ENCODE measurements at regions of chr10 and their contacts with region 1.

Region 1: GRCh38 chr10:92848441-92849233 is at the start of gene EXOC6:
- DNase-seq: peak; percentile 78
- H3K4me3 Mint-ChIP-seq: peak within 1 kb of the TSS; percentile 88
- H3K27ac Mint-ChIP-seq: peak within 1 kb of the TSS; percentile 93
- H3K4me1 Mint-ChIP-seq: peaks cover 38% of the 10 kb centered on the region
- H3K27me3 Mint-ChIP-seq: peaks cover 2% of the 10 kb centered on the region
- total RNA-seq, gene EXOC6: 13.5 TPM in 2 replicates

Region 2: GRCh38 chr10:92573798-92574547 is 274.7 kb before region 1 on chr10 and contains the start of gene IDE:
- intact Hi-C with region 1: loop called (anchors 1 kb)
- DNase-seq: peak; percentile 84
- H3K4me3 Mint-ChIP-seq: peak within 1 kb of the TSS; percentile 88
- H3K27ac Mint-ChIP-seq: peak within 1 kb of the TSS; percentile 89
- H3K4me1 Mint-ChIP-seq: peaks cover 37% of the 10 kb centered on the region
- H3K27me3 Mint-ChIP-seq: no peaks in the 10 kb centered on the region
- total RNA-seq, gene IDE: 43.4 and 54.5 TPM in 2 replicates

Region 3: GRCh38 chr10:92689663-92690210 is 158.9 kb before region 1 on chr10 and contains the start of gene HHEX:
- intact Hi-C with region 1: loop called (anchors 2 kb)
- DNase-seq: no peak
- H3K4me3 Mint-ChIP-seq: peak within 1 kb of the TSS; percentile 73
- H3K27ac Mint-ChIP-seq: peak within 1 kb of the TSS; percentile 55
- H3K4me1 Mint-ChIP-seq: peaks cover 23% of the 10 kb centered on the region
- H3K27me3 Mint-ChIP-seq: peaks cover 82% of the 10 kb centered on the region
- total RNA-seq, gene HHEX: 0.16 and 0.32 TPM in 2 replicates

Region 4: GRCh38 chr10:92778091-92778490 is 70.5 kb before region 1 on chr10:
- intact Hi-C with region 1: no loop called
- DNase-seq: no peak
- H3K4me3 Mint-ChIP-seq: no peak overlapping the region
- H3K27ac Mint-ChIP-seq: no peak overlapping the region
- H3K4me1 Mint-ChIP-seq: no peaks in the 10 kb centered on the region
- H3K27me3 Mint-ChIP-seq: peaks cover 42% of the 10 kb centered on the region

Region 5: GRCh38 chr10:92880233-92880861 is 31.7 kb after region 1 on chr10:
- intact Hi-C with region 1: loop called (anchors 1 kb)
- DNase-seq: no peak
- H3K4me3 Mint-ChIP-seq: no peak overlapping the region
- H3K27ac Mint-ChIP-seq: no peak overlapping the region
- H3K4me1 Mint-ChIP-seq: peaks cover 18% of the 10 kb centered on the region
- H3K27me3 Mint-ChIP-seq: peaks cover 3% of the 10 kb centered on the region

Region 6: DNA sequence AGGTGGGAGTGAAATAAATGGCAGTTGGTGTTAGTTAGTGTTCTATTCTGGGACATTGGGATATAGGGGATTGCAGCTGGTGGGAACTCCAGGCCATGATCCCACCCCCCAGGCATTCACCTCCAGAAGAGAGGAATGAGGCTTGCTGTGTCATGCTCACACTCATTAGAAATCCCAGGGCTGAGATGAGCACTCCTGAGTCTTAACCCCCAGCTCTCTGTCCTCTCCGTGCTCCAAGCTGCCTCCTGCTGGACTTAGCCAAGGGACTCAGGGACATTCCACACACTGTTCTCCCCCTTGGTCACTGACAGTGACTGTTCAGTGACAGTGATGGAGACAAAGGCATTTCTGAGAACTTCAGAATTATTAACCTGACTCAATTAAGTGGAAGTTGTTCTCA is 246.6 kb after region 1 on chr10:
- intact Hi-C with region 1: no loop called
- DNase-seq: no peak
- H3K4me3 Mint-ChIP-seq: no peak overlapping the region
- H3K27ac Mint-ChIP-seq: no peak overlapping the region
- H3K4me1 Mint-ChIP-seq: no peaks in the 10 kb centered on the region
- H3K27me3 Mint-ChIP-seq: peaks cover 8% of the 10 kb centered on the region

Region 7: DNA sequence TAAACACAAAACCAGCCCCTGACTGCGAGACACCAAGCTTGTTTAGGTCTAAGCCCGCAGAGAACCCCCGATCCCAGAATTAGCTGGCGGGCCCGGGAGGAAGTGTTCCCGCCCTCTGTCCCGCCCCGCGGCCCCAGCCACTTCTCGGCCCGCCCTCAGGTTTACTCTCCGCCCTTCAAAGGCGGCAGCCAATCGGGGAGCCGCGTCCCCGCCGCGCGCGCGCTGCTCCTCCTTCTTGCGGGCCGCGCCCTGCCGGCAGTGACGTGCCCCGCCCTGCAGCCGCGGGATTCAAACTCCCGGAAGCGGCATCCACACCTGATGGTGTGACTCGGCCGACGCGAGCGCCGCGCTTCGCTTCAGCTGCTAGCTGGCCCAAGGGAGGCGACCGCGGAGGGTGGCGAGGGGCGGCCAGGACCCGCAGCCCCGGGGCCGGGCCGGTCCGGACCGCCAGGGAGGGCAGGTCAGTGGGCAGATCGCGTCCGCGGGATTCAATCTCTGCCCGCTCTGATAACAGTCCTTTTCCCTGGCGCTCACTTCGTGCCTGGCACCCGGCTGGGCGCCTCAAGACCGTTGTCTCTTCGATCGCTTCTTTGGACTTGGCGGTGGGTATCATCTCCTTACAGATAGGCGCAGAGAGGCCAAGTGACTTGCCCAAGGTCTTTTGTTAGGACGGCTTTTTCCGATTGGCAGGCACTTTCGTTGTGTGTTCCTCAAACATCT is 647.8 kb after region 1 on chr10 and contains the start of gene CEP55:
- intact Hi-C with region 1: loop called (anchors 5 kb)
- DNase-seq: peak; percentile 96
- H3K4me3 Mint-ChIP-seq: peak within 1 kb of the TSS; percentile 88
- H3K27ac Mint-ChIP-seq: peak within 1 kb of the TSS; percentile 95
- H3K4me1 Mint-ChIP-seq: peaks cover 46% of the 10 kb centered on the region
- H3K27me3 Mint-ChIP-seq: no peaks in the 10 kb centered on the region
- total RNA-seq, gene CEP55: 53.0 and 55.7 TPM in 2 replicates

Region 8: GRCh38 chr10:93702211-93703001 is 853.8 kb after region 1 on chr10 and contains the start of gene FRA10AC1:
- intact Hi-C with region 1: loop called (anchors 10 kb)
- DNase-seq: peak; percentile 86
- H3K4me3 Mint-ChIP-seq: no peak within 1 kb of the TSS
- H3K27ac Mint-ChIP-seq: no peak within 1 kb of the TSS
- H3K4me1 Mint-ChIP-seq: peaks cover 19% of the 10 kb centered on the region
- H3K27me3 Mint-ChIP-seq: no peaks in the 10 kb centered on the region
- total RNA-seq, gene FRA10AC1: 25.9 and 28.2 TPM in 2 replicates

Region 9: GRCh38 chr10:93784059-93784458 is 935.4 kb after region 1 on chr10:
- intact Hi-C with region 1: no loop called
- DNase-seq: no peak
- H3K4me3 Mint-ChIP-seq: no peak overlapping the region
- H3K27ac Mint-ChIP-seq: no peak overlapping the region
- H3K4me1 Mint-ChIP-seq: no peaks in the 10 kb centered on the region
- H3K27me3 Mint-ChIP-seq: peaks cover 6% of the 10 kb centered on the region

Region 10: DNA sequence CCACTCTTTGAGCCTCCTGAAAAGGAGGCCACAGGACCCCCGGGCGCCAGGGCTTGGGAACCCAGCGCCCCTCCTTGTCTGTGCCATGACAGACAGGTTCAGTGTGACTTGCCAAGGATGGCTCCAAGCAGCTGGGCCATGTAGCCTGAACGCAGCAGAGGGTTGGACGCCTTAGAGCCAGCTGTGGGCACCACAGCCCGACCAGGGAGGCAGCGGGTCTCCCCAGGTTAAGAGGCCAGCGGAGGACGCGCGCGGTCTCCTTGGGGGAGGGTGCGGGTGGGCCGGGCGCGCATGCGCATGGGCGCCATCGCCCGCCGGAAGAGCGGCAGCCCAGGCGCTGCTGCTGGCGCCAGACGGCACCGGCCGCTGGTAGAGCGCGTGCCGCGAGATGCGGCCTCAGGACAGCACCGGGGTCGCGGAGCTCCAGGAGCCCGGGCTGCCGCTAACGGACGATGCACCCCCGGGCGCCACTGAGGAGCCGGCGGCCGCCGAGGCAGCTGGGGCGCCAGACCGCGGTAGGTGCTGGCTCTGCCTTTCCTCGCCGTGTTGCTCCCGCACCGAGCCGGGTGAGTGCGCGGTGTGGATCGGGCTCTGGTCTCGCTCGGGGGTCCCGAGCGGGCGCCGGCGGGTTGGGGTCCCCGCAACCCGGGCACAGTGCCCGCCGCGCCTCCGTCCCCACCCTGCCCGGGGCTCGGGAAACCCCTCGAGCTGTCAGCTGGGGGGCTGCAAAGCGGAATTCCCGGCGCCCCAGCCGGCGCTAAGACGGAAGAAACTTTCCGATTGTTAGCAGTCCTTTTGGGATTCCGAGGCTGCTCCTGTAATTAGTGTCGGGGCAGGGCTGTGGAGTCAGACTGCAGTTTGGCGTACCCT is 1045.2 kb after region 1 on chr10 and contains the start of gene SLC35G1:
- intact Hi-C with region 1: loop called (anchors 5 kb)
- DNase-seq: peak; percentile 57
- H3K4me3 Mint-ChIP-seq: peak within 1 kb of the TSS; percentile 85
- H3K27ac Mint-ChIP-seq: peak within 1 kb of the TSS; percentile 57
- H3K4me1 Mint-ChIP-seq: peaks cover 40% of the 10 kb centered on the region
- H3K27me3 Mint-ChIP-seq: peaks cover 6% of the 10 kb centered on the region
- total RNA-seq, gene SLC35G1: 5.6 and 5.8 TPM in 2 replicates